Panc1 (cell line): ENCODE measurements at regions of chr2 and their contacts with region 1.

Region 1: GRCh38 chr2:236352761-236353593 is 88.8 kb upstream of the ASB18 start:
- DNase-seq: peak; percentile 8
- ATAC-seq: no peak
- H3K4me3 ChIP-seq: no peak overlapping the region
- H3K27ac ChIP-seq: no peak overlapping the region
- H3K4me1 ChIP-seq: no peaks in the 10 kb centered on the region
- H3K27me3 ChIP-seq: no peaks in the 10 kb centered on the region
- CTCF ChIP-seq: peak; percentile 85

Region 2: DNA sequence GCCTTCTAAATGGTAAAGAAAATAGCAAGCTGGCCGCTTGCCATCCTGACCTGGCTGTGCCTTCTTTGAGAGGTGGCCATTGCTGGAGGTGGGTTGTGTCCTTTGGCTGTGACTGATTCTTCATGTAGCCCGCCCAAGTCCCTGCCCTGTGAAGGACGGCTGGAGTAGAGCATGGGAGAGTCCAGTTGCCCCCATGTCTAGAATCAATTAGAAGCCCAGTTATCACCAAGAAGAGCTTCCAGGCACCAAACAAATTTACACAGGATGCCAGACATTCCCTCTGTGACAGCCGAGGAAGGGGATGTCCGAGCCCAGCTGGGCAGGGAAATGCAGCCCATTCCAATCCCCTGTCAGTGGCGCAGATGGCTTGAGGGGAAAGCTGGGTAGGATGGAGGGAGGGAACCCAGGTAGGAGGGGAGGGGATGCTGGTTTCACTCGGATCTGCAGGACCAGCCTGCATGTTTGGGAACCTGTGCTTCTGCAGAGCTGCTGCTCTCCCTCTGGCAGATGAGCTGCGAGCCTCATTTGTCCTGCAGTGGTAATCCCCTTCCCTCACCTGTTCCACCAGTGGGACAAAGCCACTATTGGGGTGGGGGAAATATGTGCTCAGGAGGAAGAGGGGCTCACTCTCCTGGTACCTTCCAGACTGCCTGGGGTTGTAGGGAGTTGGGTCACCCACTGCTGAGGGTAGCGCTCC is 63.1 kb before region 1 on chr2:
- CTCF ChIA-PET with region 1: no interaction called
- POLR2A ChIA-PET with region 1: no interaction called
- in situ Hi-C with region 1: no loop called
- intact Hi-C with region 1: no loop called
- DNase-seq: no peak
- ATAC-seq: no peak
- H3K4me3 ChIP-seq: no peak overlapping the region
- H3K27ac ChIP-seq: no peak overlapping the region
- H3K4me1 ChIP-seq: no peaks in the 10 kb centered on the region
- H3K27me3 ChIP-seq: no peaks in the 10 kb centered on the region
- CTCF ChIP-seq: no peak

Region 3: DNA sequence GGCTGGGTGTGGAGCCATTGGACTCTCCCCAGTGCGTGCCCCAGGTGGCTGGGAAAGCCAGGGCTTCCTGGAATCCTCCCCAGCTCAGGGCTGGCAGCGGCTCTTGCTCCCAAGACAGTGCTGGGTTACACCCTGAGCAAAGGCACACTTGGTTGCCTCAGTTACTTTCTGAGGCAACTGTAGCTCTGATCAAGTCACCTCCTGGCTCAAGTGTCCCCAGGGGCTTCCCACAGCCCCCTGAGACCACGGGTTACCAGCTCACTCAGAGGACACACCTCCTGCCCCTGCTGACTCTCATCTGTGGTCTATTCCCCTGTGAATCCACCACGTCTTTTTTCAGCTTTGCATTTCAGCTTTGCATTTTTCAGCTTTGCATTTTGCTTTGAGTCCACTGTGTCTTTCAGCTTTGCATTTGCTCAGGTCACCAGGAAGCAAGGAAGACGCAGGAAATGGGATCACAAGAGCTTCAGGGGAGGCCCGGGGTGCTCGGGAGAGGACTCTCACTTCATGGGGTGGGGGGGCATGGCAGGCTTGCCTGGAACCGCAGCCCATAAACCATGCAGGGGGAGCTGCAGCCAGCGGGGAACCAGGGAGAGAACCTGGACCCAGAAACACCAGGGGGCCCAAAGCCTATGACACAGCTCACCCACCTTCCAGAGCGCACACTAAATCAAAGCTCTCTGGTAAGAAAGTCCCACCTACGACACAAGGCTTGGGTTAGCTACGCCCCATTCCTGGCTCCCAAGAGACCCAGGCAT is 49.2 kb after region 1 on chr2:
- CTCF ChIA-PET with region 1: no interaction called
- POLR2A ChIA-PET with region 1: no interaction called
- in situ Hi-C with region 1: no loop called
- intact Hi-C with region 1: no loop called
- DNase-seq: no peak
- ATAC-seq: no peak
- H3K4me3 ChIP-seq: no peak overlapping the region
- H3K27ac ChIP-seq: no peak overlapping the region
- H3K4me1 ChIP-seq: no peaks in the 10 kb centered on the region
- H3K27me3 ChIP-seq: no peaks in the 10 kb centered on the region
- CTCF ChIP-seq: no peak

Region 4: GRCh38 chr2:236569573-236569973 is 216.6 kb after region 1 on chr2 and contains the start of gene ACKR3:
- CTCF ChIA-PET with region 1: interaction called, 3 read pairs
- POLR2A ChIA-PET with region 1: no interaction called
- in situ Hi-C with region 1: no loop called
- intact Hi-C with region 1: loop called (anchors 5 kb)
- DNase-seq: peak; percentile 7
- ATAC-seq: peak; percentile 94
- H3K4me3 ChIP-seq: no peak within 1 kb of the TSS; a peak in 1 of 4 replicates
- H3K27ac ChIP-seq: no peak within 1 kb of the TSS
- H3K4me1 ChIP-seq: peaks cover 9% of the 10 kb centered on the region
- H3K27me3 ChIP-seq: peaks cover 43% of the 10 kb centered on the region
- CTCF ChIP-seq: peak; percentile 71; the same call in 1 of the 2 replicates
- total RNA-seq, gene ACKR3: not detected

Region 5: DNA sequence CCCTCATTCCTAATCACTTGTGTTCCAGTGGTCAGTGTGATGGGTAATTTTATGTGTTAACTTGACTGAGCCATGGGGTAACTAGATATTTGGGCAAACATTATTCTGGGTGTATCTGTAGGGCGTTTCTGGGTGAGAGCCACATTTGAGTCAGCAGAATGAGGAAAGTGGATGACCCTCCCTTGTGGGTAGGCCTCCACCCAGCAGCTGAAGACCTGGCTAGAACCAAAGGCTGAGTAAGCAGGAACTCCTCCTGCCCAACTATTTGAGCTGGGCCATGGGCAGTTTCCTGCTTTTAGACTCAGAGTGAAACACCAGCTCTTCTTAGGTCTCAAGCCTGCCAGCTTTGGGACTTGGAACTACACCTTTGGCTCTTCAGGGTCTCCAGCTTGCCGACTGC is 358.5 kb after region 1 on chr2:
- CTCF ChIA-PET with region 1: no interaction called
- POLR2A ChIA-PET with region 1: no interaction called
- in situ Hi-C with region 1: no loop called
- intact Hi-C with region 1: no loop called
- DNase-seq: no peak
- ATAC-seq: no peak
- H3K4me3 ChIP-seq: no peak overlapping the region
- H3K27ac ChIP-seq: no peak overlapping the region
- H3K4me1 ChIP-seq: no peaks in the 10 kb centered on the region
- H3K27me3 ChIP-seq: no peaks in the 10 kb centered on the region
- CTCF ChIP-seq: no peak

Region 6: GRCh38 chr2:237026981-237027711 is 674.2 kb after region 1 on chr2:
- CTCF ChIA-PET with region 1: no interaction called
- POLR2A ChIA-PET with region 1: no interaction called
- in situ Hi-C with region 1: no loop called
- intact Hi-C with region 1: loop called (anchors 2 kb)
- DNase-seq: peak; percentile 25
- ATAC-seq: peak; percentile 94
- H3K4me3 ChIP-seq: no peak overlapping the region
- H3K27ac ChIP-seq: no peak overlapping the region
- H3K4me1 ChIP-seq: no peaks in the 10 kb centered on the region
- H3K27me3 ChIP-seq: peaks cover 7% of the 10 kb centered on the region; the same call in 1 of the 2 replicates
- CTCF ChIP-seq: peak; percentile 88

Region 7: GRCh38 chr2:237060534-237061312 is 707.7 kb after region 1 on chr2:
- CTCF ChIA-PET with region 1: no interaction called
- POLR2A ChIA-PET with region 1: no interaction called
- in situ Hi-C with region 1: no loop called
- intact Hi-C with region 1: loop called (anchors 2 kb)
- DNase-seq: peak; percentile 45
- ATAC-seq: peak; percentile 87
- H3K4me3 ChIP-seq: no peak overlapping the region
- H3K27ac ChIP-seq: no peak overlapping the region
- H3K4me1 ChIP-seq: no peaks in the 10 kb centered on the region; the same call in 1 of the 2 replicates
- H3K27me3 ChIP-seq: 0 out of 2 replicates have a peak, but pooled peaks cover 2% of the 10 kb centered on the region
- CTCF ChIP-seq: peak; percentile 84